Colonic mucosa (tissue), 4 donors: ENCODE measurements at regions of chr11 and their contacts with region 1.

Region 1: DNA sequence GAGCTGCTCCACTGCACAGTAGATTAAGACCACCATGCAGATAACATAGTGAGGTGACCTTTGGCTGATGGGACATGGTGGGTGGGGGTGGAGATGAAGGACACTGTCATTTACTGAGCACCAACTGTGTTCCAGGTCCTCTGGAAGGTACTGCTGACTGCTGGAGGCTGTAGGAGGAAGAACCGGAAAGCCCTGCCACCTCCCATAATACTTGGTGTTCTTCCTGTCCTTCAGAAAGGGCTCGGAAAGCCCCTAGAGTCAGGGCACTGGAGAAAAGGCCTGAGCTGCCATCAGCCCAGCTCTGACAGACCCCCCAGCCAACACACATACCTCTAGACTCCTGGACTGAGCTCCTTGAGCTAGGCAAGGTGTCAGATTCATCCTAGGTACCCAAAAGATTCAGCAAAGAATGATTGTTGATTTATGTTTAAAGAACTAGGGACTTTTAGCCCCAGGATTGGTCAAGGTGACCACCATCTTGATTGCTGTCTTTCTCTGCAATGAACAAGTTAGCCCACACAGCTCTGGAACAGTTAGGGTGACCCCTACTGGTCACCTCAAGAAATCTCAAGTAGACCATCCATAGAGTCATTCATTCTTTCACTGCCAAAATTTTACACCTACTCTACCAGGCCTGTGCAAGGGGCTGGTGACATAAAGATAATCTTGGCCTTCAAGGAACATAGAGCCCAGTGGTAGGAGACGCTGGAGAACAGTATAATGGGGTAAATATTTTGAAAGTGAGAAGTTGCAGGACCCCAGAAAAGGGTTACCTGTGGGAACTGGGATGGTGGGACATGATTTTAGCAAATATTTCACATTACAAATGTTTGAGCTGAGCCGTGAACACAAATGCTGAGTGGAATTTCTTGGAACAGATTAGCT is 39.4 kb downstream of the IRAG1 start:
- DNase-seq: no peak
- H3K4me3 ChIP-seq: no peak overlapping the region
- H3K27ac ChIP-seq: no peak overlapping the region
- H3K4me1 ChIP-seq: no peaks in the 10 kb centered on the region
- H3K27me3 ChIP-seq: no peaks in the 10 kb centered on the region
- CTCF ChIP-seq: peak; percentile 58

Region 2: DNA sequence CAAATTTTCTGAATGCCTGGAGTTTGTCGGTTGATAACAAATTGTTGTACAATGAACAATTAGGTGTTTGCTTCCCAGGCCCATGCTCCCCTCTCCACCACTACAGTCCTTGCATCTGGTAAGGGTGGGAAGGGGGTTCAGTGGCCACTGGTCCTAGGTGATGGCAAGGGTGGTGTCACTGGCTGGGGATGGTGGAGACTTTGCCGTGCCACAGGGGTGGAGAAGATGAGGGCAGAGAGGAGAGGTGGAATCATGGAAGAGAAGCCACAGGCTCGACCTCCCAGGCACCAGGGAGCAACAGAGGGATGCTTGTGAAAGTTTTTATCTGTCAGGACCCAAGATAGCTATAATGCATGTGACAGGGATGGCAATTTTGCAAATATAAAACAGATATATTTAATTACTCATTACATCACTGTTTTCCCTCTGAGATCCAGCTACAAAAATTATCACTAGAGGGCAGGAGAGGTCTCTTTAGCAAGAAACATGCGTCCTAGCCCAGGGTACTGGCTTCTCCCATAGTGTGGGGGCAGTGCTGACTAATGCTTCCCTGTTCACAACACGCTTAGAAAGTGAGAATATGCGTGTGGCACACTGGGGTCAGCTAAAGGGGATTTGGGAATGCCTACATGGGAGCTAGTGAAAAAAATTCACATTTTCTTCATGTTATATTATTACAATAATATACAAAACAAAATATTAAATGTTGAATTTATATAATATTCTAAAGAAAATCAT is 248.1 kb before region 1 on chr11:
- intact Hi-C with region 1: loop called (anchors 2 kb)
- DNase-seq: peak; percentile 58
- H3K4me3 ChIP-seq: no peak overlapping the region
- H3K27ac ChIP-seq: no peak overlapping the region
- H3K4me1 ChIP-seq: no peaks in the 10 kb centered on the region
- H3K27me3 ChIP-seq: no peaks in the 10 kb centered on the region
- CTCF ChIP-seq: peak; percentile 60

Region 3: GRCh38 chr11:10709299-10710086 is 55.3 kb after region 1 on chr11:
- intact Hi-C with region 1: no loop called
- DNase-seq: no peak
- H3K4me3 ChIP-seq: no peak overlapping the region
- H3K27ac ChIP-seq: peak overlapping the region; percentile 16
- H3K4me1 ChIP-seq: no peaks in the 10 kb centered on the region
- H3K27me3 ChIP-seq: no peaks in the 10 kb centered on the region
- CTCF ChIP-seq: no peak

Region 4: DNA sequence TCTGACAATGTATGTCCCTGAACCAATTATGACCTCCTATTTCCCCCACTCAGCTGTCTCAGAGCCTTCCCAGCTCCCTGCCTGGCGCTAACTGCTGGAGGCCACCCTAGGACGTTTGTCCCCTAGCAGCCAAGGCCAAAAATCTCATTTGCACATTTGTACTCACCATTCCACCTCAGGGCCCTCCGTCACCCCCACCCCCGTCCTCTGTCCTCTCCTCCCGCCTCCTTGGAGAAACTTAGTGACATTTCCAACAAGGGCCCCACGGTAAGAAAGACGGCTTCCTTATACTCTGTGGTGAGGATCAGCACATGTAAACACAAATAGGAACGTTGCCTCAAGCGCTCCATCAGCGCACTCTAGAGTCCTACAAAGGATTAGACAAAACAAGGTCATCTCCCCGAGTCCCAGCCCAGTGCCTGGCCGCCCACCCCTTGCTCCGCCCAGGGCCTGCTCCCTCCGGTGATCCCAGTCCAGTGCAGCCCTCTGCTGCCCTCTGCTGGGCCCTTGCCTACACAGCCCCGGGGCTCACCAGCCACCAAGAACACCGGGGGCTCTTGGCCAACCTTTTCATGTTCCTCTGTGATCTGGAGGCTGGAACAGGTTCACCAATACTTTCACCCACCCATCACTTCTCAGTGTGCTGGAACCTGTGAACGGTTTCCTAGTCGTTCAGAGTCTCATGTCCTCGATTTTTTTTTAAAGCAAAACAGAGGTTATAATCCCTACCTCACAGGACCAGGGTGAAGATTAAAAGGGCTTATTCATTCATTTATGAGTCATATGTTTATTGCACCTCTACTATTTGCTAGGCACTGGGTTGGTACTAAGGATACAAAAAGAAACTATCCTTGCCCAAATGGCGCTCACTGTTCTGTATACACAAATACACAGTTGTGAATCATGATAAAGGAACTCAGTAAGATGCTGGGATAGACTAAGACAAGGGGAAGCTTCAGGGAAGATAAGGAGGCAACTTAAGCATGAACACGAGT is 81.6 kb after region 1 on chr11:
- intact Hi-C with region 1: loop called (anchors 2 kb)
- DNase-seq: peak; percentile 92
- H3K4me3 ChIP-seq: no peak overlapping the region
- H3K27ac ChIP-seq: no peak overlapping the region
- H3K4me1 ChIP-seq: no peaks in the 10 kb centered on the region
- H3K27me3 ChIP-seq: no peaks in the 10 kb centered on the region
- CTCF ChIP-seq: peak; percentile 99